ENCODE measurements at regions of chr2 and their contacts with region 1.

Region 1: DNA sequence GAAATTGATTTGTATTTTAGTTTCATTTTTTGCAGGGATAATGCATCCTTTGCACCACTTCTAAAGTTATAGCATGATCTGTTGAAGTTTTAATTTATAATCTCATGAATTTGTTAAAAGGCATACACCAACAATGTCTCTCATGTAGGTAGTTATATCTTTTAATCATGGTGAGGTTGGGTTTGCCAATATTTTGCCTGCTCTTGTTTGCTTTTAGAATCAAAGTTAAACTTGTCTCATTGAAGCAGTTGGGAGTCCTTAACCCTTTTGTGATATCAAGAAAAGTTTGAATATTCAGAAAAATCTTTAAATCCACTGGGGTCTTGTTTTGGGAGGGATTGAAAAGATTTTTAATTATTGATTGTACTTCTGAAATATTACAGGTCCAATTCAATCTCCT is 31.7 kb downstream of the APLF start:
- DNase-seq: no peak
- H3K4me3 ChIP-seq: no peak overlapping the region
- H3K27ac ChIP-seq: no peak overlapping the region
- H3K4me1 ChIP-seq: no peaks in the 10 kb centered on the region
- H3K27me3 ChIP-seq: no peaks in the 10 kb centered on the region
- CTCF ChIP-seq: no peak

Region 2: DNA sequence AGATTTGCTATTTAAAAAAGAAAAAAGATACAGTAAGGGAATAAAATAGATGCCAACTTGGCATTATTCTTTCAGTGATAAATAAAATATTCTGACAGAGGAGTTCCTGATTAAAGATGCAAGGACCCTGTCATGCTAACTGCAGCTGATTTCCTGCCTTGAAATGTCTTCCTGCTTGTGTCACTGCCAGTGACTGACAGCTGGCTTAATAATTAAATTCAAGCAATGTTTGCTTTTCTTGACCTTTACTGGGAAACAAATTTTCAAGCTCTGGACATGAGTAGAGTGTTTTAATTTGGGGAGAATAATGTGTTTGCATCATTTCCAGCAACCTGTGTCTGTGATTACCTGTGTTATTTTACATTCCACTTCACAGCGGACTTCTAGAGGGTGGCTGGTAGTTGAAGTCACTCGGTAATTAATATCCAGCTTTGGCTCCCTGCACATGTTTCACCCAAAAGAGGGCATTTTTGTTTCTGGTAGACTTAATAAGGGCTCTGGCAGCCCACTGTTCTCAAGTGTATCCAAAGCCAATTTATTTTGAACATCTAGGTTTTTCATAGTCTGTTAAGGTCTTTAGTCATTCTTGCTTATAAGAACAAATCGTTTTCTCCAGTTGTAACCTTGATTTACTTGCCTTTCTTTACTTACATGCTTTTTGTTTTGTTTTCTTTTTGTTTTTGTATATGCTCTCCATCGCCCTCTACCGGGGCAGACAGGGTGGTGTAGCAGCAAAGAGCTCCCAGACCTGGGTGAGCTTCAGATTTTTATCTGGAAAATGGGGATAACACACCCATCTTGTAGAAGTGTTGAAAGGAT is 95.8 kb after region 1 on chr2:
- CTCF ChIA-PET with region 1: no interaction called
- POLR2A ChIA-PET with region 1: no interaction called
- intact Hi-C with region 1: loop called (anchors 5 kb)
- DNase-seq: peak; percentile 81
- H3K4me3 ChIP-seq: peak overlapping the region; percentile 7
- H3K27ac ChIP-seq: peak overlapping the region; percentile 77
- H3K4me1 ChIP-seq: peaks cover 23% of the 10 kb centered on the region
- H3K27me3 ChIP-seq: no peaks in the 10 kb centered on the region
- CTCF ChIP-seq: peak; percentile 94